Left ventricle myocardium superior (tissue), 1 donor: ENCODE measurements at regions of chr4 and their contacts with region 1.

Region 1: GRCh38 chr4:8709729-8710360 is 117.3 kb downstream of the CPZ start:
- DNase-seq: peak; percentile 11
- ATAC-seq: no peak

Region 2: GRCh38 chr4:7017446-7018330 is 1692.2 kb before region 1 on chr4:
- intact Hi-C with region 1: loop called (anchors 10 kb)
- DNase-seq: no peak
- ATAC-seq: peak; percentile 16

Region 3: DNA sequence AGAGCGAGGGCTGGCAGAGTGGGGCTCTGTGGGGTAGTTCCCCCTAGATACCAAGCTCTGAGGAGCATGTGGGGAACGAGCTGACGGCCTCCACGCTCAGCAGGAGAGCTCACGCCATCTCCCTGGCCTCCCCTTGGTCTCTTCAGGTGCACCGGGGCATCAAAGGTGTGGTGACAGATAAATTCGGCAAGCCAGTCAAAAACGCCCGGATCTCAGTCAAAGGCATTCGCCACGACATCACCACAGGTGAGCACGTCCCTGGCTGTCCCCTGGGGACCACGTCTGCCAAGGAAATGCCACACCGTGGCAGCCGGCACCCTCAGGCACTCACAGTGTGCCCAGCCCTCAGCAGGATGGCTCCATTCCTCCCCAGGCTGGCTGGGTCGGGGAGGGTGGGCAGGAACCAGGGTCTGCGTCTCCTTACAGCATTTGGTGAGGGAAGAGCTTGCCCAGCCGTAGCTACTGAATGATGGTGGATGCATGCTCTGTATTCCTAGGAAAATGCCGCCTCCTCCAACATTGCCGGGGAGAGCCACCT is 91.5 kb before region 1 on chr4:
- intact Hi-C with region 1: no loop called
- DNase-seq: peak; percentile 9
- ATAC-seq: no peak